HEK293 (cell line): ENCODE measurements at regions of chr19 and their contacts with region 1.

Region 1: DNA sequence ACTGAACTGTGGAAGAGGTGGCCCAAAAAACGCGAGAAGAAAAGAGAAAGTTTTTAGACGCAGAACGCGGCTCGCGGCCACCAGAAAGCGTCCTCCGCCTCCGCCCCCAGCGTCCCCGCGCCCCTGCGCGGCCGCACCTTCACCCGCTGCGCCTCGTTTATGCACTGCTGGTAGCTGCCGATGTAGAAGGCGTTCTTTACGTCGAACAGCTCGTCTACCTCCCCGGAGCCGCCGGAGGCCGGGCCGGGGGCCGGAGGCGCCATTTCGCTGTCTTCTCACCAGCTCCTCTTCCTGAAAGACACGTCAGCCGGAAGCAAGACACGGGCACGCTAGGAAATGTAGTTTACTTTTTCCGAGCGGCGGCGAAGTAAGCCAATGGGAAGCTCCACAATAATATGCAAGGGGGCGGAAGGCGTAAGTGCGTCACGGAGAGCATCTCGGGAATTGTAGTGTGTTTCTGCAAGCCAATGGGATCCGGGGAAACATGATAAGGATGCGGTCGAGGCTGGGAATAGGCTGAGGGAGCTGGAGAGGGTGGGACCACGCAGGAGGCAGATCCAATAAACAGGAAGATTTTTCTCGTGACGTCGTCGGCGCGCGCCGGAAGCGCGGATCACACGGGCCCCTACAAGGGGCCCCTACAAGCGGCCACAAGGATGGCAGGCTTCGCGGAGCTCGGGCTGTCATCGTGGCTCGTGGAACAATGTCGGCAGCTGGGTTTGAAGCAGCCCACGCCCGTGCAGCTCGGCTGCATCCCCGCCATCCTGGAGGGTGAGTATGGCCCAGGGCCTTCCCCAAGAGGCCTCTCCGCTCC is at the starts of genes COPE and DDX49:
- H3K4me3 ChIP-seq: peak within 1 kb of the TSS; percentile 94
- H3K27ac ChIP-seq: peak within 1 kb of the TSS; percentile 27; the same call in 1 of the 2 replicates
- H3K4me1 ChIP-seq: no peaks in the 10 kb centered on the region
- CTCF ChIP-seq: peak; percentile 21; the same call in 1 of the 2 replicates

Region 2: GRCh38 chr19:18809150-18809868 is 110.0 kb before region 1 on chr19:
- CTCF ChIA-PET with region 1: no interaction called
- POLR2A ChIA-PET with region 1: no interaction called
- H3K4me3 ChIP-seq: no peak overlapping the region
- H3K27ac ChIP-seq: no peak overlapping the region
- H3K4me1 ChIP-seq: no peaks in the 10 kb centered on the region
- CTCF ChIP-seq: no peak

Region 3: GRCh38 chr19:18932216-18932841 is 13.0 kb after region 1 on chr19:
- CTCF ChIA-PET with region 1: no interaction called
- POLR2A ChIA-PET with region 1: interaction called, 41 read pairs
- H3K4me3 ChIP-seq: no peak overlapping the region
- H3K27ac ChIP-seq: no peak overlapping the region
- H3K4me1 ChIP-seq: no peaks in the 10 kb centered on the region
- CTCF ChIP-seq: no peak

Region 4: DNA sequence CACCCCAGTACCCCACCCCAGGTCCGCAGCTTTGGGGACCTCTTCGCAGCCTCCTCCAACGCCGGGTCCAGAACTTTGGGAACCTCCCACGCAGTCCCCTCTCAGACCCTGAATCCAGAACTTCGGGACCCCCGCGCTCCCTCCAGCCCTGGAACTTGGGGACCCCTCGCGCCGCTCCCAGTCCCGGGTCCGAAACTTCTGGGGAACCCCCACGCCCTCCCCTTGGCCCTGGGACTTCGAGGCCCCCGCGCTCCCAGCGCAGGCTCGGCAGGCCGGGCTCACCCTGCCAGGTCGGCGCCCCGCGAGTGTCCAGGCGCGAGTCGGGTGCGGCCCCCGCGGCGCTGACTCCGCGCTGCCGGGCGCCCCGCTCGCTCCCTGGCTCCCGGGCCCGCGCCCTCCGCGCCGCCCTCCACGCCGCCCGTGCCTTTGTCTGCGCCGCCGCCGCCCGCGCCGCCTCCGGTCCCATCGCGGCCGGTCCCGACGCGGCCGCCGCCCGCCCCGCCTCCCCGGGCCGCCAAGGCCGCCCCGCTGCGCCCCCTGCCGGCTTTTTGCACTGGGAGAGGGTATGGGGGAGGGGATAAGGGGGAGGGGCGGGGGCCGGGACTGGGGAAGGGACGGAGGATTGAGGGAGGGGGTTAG is 21.6 kb after region 1 on chr19 and contains the start of gene HOMER3:
- CTCF ChIA-PET with region 1: interaction called, 4 read pairs
- POLR2A ChIA-PET with region 1: interaction called, 11 read pairs
- H3K4me3 ChIP-seq: peak within 1 kb of the TSS; percentile 62
- H3K27ac ChIP-seq: peak within 1 kb of the TSS; percentile 53; the same call in 1 of the 2 replicates
- H3K4me1 ChIP-seq: peaks cover 2% of the 10 kb centered on the region; the same call in 1 of the 2 replicates
- CTCF ChIP-seq: no peak